ENCODE measurements at regions of chr12 and their contacts with region 1.

Region 1: GRCh38 chr12:685388-685787 is 22.1 kb upstream of the NINJ2 start:
- DNase-seq: peak; percentile 93
- ATAC-seq: peak; percentile 96
- H3K4me3 Mint-ChIP-seq: peak overlapping the region; percentile 48
- H3K27ac Mint-ChIP-seq: peak overlapping the region; percentile 94
- H3K4me1 Mint-ChIP-seq: peaks cover 37% of the 10 kb centered on the region
- H3K27me3 Mint-ChIP-seq: no peaks in the 10 kb centered on the region

Region 2: DNA sequence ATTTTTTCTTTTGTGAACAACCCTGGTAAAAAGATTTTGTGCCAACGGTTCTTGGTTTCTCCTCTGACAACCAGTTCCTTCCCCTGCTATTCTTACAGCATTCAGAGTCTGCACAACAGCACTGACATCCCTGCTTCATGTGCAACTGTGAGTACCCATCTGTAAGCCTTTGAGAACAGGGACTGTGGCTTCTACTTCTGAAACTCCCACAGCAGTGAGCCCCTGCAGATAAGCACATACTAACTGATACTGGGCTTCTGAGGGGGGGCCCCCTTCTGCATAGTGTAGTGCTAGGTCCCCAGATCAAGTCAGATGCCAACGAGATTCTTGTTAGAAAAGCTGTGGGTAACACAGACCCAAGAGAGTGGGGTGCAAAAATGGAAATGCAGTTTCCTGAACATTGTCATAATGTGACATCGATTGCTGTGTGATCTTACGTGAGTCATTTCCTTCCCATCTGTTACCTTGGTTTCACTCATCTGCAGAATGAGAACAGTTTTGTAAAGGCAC is 11.1 kb before region 1 on chr12:
- CTCF ChIA-PET with region 1: interaction called, 7 read pairs
- POLR2A ChIA-PET with region 1: interaction called, 19 read pairs
- DNase-seq: peak; percentile 82
- ATAC-seq: peak; percentile 92
- H3K4me3 Mint-ChIP-seq: peak overlapping the region; percentile 61
- H3K27ac Mint-ChIP-seq: peak overlapping the region; percentile 94
- H3K4me1 Mint-ChIP-seq: peaks cover 70% of the 10 kb centered on the region
- H3K27me3 Mint-ChIP-seq: no peaks in the 10 kb centered on the region